K562 (cell line): ENCODE measurements at regions of chr3 and their contacts with region 1.

Region 1: GRCh38 chr3:87260270-87260669 is 16.1 kb downstream of the POU1F1 start:
- DNase-seq: peak; percentile 8 to 57 (median 14)
- ATAC-seq: peak; percentile 65
- H3K4me3 ChIP-seq: no peak overlapping the region
- H3K27ac ChIP-seq: no peak overlapping the region
- H3K4me1 ChIP-seq: no peaks in the 10 kb centered on the region
- H3K27me3 ChIP-seq: no peaks in the 10 kb centered on the region
- CTCF ChIP-seq: peak in 2 of 3 experiments; percentile 45 to 60; a peak in 4 of 6 replicates
- EP300 ChIP-seq: no peak
- POLR2A ChIP-seq: no peak
- RAD21 ChIP-seq: peak; percentile 29 to 50; a peak in 3 of 4 replicates

Region 2: GRCh38 chr3:86990734-86991481 is 269.4 kb before region 1 on chr3 and contains the start of gene VGLL3:
- CTCF ChIA-PET with region 1: no interaction called
- POLR2A ChIA-PET with region 1: no interaction called
- in situ Hi-C with region 1: no loop called
- intact Hi-C with region 1: no loop called
- DNase-seq: no peak
- ATAC-seq: no peak
- H3K4me3 ChIP-seq: no peak within 1 kb of the TSS
- H3K27ac ChIP-seq: no peak within 1 kb of the TSS
- H3K4me1 ChIP-seq: peaks cover 0 to 12% of the 10 kb centered on the region in 2 experiments; a peak in 1 of 5 replicates
- H3K27me3 ChIP-seq: peaks cover 0 to 8% of the 10 kb centered on the region in 2 experiments; a peak in 2 of 5 replicates
- CTCF ChIP-seq: no peak
- EP300 ChIP-seq: no peak
- POLR2A ChIP-seq: no peak
- RAD21 ChIP-seq: no peak
- polyA plus RNA-seq, gene VGLL3: not detected

Region 3: GRCh38 chr3:88113311-88114162 is 853.3 kb after region 1 on chr3:
- CTCF ChIA-PET with region 1: no interaction called
- POLR2A ChIA-PET with region 1: no interaction called
- in situ Hi-C with region 1: no loop called
- intact Hi-C with region 1: loop called (anchors 5 kb)
- DNase-seq: peak; percentile 25 to 79 (median 47)
- ATAC-seq: peak; percentile 97
- H3K4me3 ChIP-seq: no peak overlapping the region
- H3K27ac ChIP-seq: no peak overlapping the region
- H3K4me1 ChIP-seq: no peaks in the 10 kb centered on the region; a peak in 1 of 5 replicates
- H3K27me3 ChIP-seq: no peaks in the 10 kb centered on the region
- CTCF ChIP-seq: peak; percentile 44 to 63 (median 52)
- EP300 ChIP-seq: no peak
- POLR2A ChIP-seq: no peak
- RAD21 ChIP-seq: peak; percentile 43 to 68